Cardiac septum (tissue), 1 donor: ENCODE measurements at regions of chr5 and their contacts with region 1.

Region 1: DNA sequence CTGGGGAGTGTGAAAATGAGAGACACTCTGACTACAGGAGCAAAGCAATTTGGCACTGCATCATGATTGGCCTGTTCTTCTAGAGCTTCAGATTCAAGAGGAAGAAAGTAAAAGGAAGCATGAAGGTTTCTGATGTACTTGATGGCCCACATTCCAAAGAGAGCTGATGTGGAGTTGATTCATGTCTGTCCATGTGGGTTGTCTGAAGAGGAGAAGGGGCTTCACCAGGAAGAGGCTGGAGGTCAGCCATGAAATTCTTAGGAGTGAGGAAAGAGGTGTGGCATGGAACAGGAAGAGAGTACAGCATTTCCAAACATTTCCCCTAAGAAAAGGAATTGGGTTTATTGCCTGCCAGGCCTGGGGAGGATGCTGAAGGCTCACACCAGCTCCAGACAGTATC is 70.7 kb downstream of the PTCD2 start:
- DNase-seq: no peak

Region 2: GRCh38 chr5:72507909-72508575 is 117.2 kb after region 1 on chr5:
- intact Hi-C with region 1: loop called (anchors 2 kb)
- DNase-seq: no peak